Sigmoid colon (tissue), 7 donors: ENCODE measurements at regions of chr11 and their contacts with region 1.

Region 1: DNA sequence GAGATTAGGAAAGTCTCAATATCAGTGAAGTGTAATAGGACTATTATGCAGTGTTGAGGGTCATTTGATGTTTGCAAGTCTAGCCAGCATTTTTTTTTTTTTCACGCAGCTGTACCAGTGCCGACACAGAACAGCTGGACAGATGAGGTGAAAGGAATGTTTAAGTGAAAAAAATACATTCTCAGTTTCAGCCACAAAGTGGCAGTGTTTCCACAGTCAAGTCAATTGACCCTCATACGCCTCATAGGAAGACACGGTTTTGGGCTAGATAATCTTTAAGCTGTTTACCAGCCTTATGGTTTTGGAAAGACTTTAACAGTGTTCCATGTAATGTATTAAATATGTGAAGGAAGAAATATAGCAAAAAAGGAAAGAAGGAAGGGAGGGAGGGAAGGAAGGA is 349.9 kb upstream of the ANO3 start:
- DNase-seq: no peak
- H3K4me3 ChIP-seq: no peak overlapping the region
- H3K27ac ChIP-seq: no peak overlapping the region
- H3K4me1 ChIP-seq: no peaks in the 10 kb centered on the region
- H3K27me3 ChIP-seq: no peaks in the 10 kb centered on the region
- CTCF ChIP-seq: peak in 2 of 4 experiments; percentile 44 to 55
- EP300 ChIP-seq: no peak
- POLR2A ChIP-seq: no peak

Region 2: GRCh38 chr11:26227296-26227695 is 245.3 kb after region 1 on chr11:
- intact Hi-C with region 1: loop called (anchors 1 kb)
- DNase-seq: no peak
- H3K4me3 ChIP-seq: no peak overlapping the region
- H3K27ac ChIP-seq: peak overlapping the region in 1 of 4 donors; percentile 55
- H3K4me1 ChIP-seq: peaks cover 0 to 8% (median 0%) of the 10 kb centered on the region in 4 donors
- H3K27me3 ChIP-seq: no peaks in the 10 kb centered on the region
- CTCF ChIP-seq: peak in 2 of 4 experiments; percentile 16 to 21
- EP300 ChIP-seq: no peak
- POLR2A ChIP-seq: no peak

Region 3: GRCh38 chr11:26276798-26277424 is 294.9 kb after region 1 on chr11:
- intact Hi-C with region 1: loop called (anchors 1 kb)
- DNase-seq: peak; percentile 66
- H3K4me3 ChIP-seq: no peak overlapping the region
- H3K27ac ChIP-seq: no peak overlapping the region
- H3K4me1 ChIP-seq: no peaks in the 10 kb centered on the region
- H3K27me3 ChIP-seq: no peaks in the 10 kb centered on the region
- CTCF ChIP-seq: peak; percentile 33 to 94 (median 82)
- EP300 ChIP-seq: no peak
- POLR2A ChIP-seq: no peak